Aorta (tissue), 5 donors: ENCODE measurements at regions of chr5 and their contacts with region 1.

Region 1: DNA sequence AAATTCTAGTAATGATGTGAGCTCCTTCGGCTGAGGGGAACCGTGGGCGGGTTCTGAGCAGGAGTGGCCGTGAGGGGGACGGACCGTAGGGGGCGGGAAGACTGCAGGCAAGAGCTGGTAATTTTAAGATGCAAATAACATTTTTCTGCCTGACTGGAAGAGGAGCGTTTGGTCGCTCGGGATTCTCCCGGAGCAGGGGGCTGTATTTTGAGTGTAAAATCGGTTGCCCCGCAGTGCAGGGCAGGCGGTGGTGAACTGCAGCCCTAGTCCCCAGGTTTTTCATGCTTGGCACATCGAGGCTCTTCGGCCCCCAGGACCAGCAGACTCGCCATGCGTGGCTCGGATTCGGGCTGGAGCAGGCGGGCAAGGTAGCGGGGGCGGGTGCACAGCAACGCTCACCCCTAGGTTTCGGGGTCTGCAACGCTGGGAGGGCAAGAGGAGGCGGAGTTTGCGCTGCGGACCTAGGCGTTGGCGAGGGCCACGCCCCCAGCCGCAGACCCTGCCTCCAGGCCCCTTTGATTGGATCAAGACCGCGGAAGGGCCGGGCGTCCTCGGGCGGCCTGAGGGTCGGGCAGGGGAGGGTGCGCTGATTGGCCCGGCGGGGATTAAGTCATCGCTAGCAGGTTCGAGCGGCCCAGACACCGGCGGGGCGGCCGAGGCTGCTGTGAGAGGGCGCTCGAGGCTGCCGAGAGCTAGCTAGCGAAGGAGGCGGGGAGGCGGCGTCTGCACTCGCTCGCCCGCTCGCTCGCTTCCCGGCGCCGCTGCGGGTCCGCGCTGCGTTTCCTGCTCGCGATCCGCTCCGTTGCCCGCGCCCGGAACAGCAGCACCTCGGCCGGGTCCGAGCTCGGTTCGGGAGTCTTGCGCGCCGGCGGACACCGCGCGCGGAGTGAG is at the start of gene ARHGAP26:
- DNase-seq: peak; percentile 98 to 99
- ATAC-seq: peak; percentile 99
- H3K4me3 ChIP-seq: peak within 1 kb of the TSS; percentile 89 to 92
- H3K27ac ChIP-seq: peak within 1 kb of the TSS; percentile 83 to 87
- H3K4me1 ChIP-seq: peaks cover 0 to 4% of the 10 kb centered on the region in 2 donors
- H3K27me3 ChIP-seq: no peaks in the 10 kb centered on the region
- total RNA-seq, gene ARHGAP26: 51.1 to 70.7 TPM

Region 2: DNA sequence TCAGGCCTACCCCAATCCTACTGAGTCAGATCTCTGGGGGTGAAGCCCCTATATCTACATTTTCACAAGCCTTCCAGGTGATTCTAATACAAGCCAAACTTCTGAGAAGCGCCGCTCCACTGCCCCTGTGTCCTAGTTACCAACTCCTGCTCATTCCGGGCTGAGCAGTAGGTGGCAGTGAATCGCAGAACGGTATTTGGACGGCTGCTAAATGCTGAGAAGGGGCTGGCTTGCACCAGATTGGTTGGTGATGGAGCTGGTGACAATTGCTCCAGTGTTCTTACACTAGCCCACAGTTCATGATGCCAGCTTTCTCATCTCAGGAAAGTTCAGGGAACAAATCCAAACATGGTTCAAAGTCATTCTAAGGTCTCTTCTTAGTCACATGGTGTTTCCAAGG is 53.0 kb before region 1 on chr5:
- intact Hi-C with region 1: loop called in 1 of 2 experiments (anchors 5 kb)
- DNase-seq: peak; percentile 64 to 79
- ATAC-seq: peak; percentile 44
- H3K4me3 ChIP-seq: no peak overlapping the region
- H3K27ac ChIP-seq: no peak overlapping the region
- H3K4me1 ChIP-seq: no peaks in the 10 kb centered on the region
- H3K27me3 ChIP-seq: no peaks in the 10 kb centered on the region

Region 3: DNA sequence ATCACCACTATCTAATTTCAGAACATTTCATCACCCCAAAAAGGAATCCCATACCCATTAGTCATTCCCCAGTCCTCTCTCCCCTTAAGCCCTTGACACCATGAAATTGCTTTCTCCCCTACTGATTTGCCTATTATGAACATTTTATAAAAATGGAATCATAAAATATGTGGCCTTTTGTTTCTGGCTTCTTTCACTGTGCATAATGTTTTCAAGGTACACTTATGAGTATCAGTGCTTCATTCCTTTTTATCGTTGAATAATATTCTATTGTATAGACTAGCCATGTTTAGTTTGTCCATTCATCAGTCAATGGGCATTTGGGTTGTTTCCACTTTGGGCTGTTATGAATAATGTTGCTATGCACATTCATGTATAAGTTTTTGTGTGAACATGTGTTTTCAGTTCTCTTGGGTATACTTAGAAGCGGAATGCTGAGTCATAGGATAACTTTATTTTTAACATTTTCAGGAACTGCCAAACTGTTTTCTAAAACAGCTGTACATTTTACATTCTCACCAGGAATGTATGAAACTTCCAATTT is 43.7 kb before region 1 on chr5:
- intact Hi-C with region 1: loop called (anchors 5 kb)
- DNase-seq: no peak
- ATAC-seq: no peak
- H3K4me3 ChIP-seq: no peak overlapping the region
- H3K27ac ChIP-seq: no peak overlapping the region
- H3K4me1 ChIP-seq: peaks cover 0 to 2% of the 10 kb centered on the region in 2 donors
- H3K27me3 ChIP-seq: no peaks in the 10 kb centered on the region

Region 4: GRCh38 chr5:142816531-142817430 is 46.8 kb after region 1 on chr5:
- intact Hi-C with region 1: loop called in 1 of 2 experiments (anchors 5 kb)
- DNase-seq: peak; percentile 87 to 91
- ATAC-seq: no peak
- H3K4me3 ChIP-seq: no peak overlapping the region
- H3K27ac ChIP-seq: peak overlapping the region in 1 of 2 donors; percentile 90
- H3K4me1 ChIP-seq: peaks cover 2 to 5% of the 10 kb centered on the region in 2 donors
- H3K27me3 ChIP-seq: no peaks in the 10 kb centered on the region

Region 5: DNA sequence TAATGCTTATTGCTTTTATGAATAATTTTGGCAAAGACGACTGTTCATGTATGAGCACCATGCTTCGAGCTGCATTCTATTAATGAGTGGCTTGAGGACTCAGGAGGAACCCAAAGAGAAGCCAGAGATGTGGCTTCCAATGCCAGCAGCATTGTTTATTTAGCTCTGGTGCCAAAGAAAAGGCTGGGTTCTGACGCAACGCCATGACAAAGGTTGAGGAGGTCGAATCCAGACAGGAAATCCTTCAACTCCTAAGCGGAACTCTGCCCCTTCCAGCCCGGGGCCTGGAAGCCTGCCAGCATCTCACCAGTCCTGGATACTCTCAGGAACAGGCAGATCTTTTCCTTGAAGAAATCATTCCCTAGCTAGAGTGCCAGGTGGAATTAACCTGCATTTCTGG is 104.6 kb after region 1 on chr5:
- intact Hi-C with region 1: loop called in 1 of 2 experiments (anchors 5 kb)
- DNase-seq: peak; percentile 93 to 96
- ATAC-seq: peak; percentile 79
- H3K4me3 ChIP-seq: no peak overlapping the region
- H3K27ac ChIP-seq: peak overlapping the region in 1 of 2 donors; percentile 73
- H3K4me1 ChIP-seq: peaks cover 3 to 4% of the 10 kb centered on the region in 2 donors
- H3K27me3 ChIP-seq: no peaks in the 10 kb centered on the region